ENCODE measurements at regions of chr4 and their contacts with region 1.

Region 1: DNA sequence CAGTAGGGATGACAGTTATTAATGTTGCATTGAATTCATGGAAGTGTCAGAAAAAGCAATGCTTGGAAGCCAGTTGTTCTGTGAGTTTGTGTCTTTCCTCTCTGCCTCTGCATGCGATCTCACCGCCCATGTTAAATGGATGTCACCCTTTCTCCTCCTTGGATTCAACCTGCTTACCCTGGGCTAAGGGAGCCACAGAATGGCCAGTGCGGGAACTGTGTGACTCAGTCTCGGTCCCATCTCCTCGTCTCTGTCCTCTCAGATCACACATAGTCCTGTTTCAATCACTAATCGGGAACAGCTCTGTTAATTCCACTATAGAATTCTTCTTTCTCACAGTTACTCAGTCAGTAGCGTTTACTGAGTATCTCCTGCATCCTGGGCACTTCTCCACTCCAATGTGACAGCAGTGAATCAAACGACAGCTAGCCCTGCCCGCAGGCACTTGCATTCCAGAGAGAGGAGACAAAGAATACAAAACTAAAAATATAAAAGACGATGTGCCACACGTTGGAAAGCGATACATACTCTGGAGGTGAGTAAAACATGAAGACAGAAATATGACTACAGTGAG is 53.7 kb upstream of the TLR3 start:
- DNase-seq: no peak
- H3K4me3 ChIP-seq: no peak overlapping the region
- CTCF ChIP-seq: no peak

Region 2: GRCh38 chr4:185298728-185299430 is 716.4 kb before region 1 on chr4:
- in situ Hi-C with region 1: no loop called
- DNase-seq: no peak
- H3K4me3 ChIP-seq: no peak overlapping the region
- CTCF ChIP-seq: no peak

Region 3: GRCh38 chr4:185921583-185922555 is 93.4 kb before region 1 on chr4:
- in situ Hi-C with region 1: loop called (anchors 5 kb)
- DNase-seq: no peak
- H3K4me3 ChIP-seq: no peak overlapping the region
- CTCF ChIP-seq: no peak

Region 4: DNA sequence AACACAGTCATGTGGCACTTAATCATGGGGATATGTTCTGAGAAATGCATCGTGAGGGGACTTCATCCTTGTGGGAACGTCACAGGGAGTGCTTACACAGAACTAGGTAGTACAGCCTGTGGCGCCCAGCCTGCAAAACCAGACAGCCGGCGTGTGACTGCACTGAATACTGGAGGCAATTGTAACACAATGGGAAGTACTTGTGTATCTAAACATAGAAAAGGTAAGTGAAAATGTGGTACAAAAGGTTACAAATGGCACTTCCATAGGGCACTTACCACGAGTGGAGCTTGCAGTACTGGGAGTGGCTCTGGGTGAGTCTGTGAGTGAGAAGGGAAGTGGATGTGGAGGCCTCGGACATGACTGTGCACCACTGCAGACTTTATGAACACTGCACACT is 58.9 kb after region 1 on chr4:
- in situ Hi-C with region 1: no loop called
- DNase-seq: no peak
- H3K4me3 ChIP-seq: no peak overlapping the region
- CTCF ChIP-seq: no peak

Measured in astrocyte of the cerebellum (primary cell).